CD4-positive, alpha-beta T cell (primary cell): ENCODE measurements at regions of chr4 and their contacts with region 1.

Region 1: DNA sequence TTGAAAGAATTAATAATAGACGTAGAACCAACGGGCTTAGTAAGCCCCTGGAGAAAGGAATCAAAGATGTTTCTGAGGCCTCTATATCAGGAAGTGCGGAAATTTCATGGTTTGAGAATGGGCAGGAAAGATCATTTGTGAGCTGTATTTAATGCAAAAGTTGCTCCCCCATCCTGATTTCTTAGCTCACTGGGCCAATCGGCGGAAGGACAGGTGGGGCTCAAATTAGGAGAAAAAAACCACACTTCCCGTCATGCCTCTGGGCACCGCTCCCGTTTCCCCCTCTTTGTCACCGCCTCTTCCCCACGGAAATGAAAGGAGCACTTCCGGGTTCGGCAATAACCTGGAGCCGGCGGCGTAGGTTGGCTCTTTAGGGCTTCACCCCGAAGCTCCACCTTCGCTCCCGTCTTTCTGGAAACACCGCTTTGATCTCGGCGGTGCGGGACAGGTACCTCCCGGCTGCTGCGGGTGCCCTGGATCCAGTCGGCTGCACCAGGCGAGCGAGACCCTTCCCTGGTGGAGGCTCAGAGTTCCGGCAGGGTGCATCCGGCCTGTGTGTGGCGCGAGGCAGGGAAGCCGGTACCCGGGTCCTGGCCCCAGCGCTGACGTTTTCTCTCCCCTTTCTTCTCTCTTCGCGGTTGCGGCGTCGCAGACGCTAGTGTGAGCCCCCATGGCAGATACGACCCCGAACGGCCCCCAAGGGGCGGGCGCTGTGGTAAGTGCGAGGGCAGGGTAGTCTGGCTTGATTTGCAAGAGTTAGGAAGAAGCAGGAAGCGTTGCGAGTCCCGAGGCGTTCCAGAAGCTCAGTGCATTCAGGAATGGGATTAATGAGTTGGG is at the start of gene TMEM33:
- DNase-seq: peak; percentile 59 to 92 (median 70)
- ATAC-seq: peak; percentile 85
- H3K4me3 ChIP-seq: peak within 1 kb of the TSS; percentile 85
- H3K4me3 Mint-ChIP-seq: peak within 1 kb of the TSS; percentile 94
- H3K27ac ChIP-seq: peak within 1 kb of the TSS; percentile 51 to 76
- H3K27ac Mint-ChIP-seq: peak within 1 kb of the TSS; percentile 86
- H3K4me1 ChIP-seq: peaks cover 25% of the 10 kb centered on the region
- H3K4me1 Mint-ChIP-seq: peaks cover 55% of the 10 kb centered on the region
- H3K27me3 ChIP-seq: no peaks in the 10 kb centered on the region
- H3K27me3 Mint-ChIP-seq: no peaks in the 10 kb centered on the region
- CTCF ChIP-seq: peak; percentile 16
- total RNA-seq, gene TMEM33: 18.0 to 19.7 TPM

Region 2: GRCh38 chr4:41949531-41949930 is 14.5 kb after region 1 on chr4:
- CTCF ChIA-PET with region 1: no interaction called
- POLR2A ChIA-PET with region 1: no interaction called
- intact Hi-C with region 1: no loop called
- DNase-seq: no peak
- ATAC-seq: no peak
- H3K4me3 ChIP-seq: no peak overlapping the region
- H3K4me3 Mint-ChIP-seq: no peak overlapping the region
- H3K27ac ChIP-seq: no peak overlapping the region
- H3K27ac Mint-ChIP-seq: no peak overlapping the region
- H3K4me1 ChIP-seq: no peaks in the 10 kb centered on the region
- H3K4me1 Mint-ChIP-seq: peaks cover 10% of the 10 kb centered on the region
- H3K27me3 ChIP-seq: no peaks in the 10 kb centered on the region
- H3K27me3 Mint-ChIP-seq: no peaks in the 10 kb centered on the region
- CTCF ChIP-seq: no peak

Region 3: DNA sequence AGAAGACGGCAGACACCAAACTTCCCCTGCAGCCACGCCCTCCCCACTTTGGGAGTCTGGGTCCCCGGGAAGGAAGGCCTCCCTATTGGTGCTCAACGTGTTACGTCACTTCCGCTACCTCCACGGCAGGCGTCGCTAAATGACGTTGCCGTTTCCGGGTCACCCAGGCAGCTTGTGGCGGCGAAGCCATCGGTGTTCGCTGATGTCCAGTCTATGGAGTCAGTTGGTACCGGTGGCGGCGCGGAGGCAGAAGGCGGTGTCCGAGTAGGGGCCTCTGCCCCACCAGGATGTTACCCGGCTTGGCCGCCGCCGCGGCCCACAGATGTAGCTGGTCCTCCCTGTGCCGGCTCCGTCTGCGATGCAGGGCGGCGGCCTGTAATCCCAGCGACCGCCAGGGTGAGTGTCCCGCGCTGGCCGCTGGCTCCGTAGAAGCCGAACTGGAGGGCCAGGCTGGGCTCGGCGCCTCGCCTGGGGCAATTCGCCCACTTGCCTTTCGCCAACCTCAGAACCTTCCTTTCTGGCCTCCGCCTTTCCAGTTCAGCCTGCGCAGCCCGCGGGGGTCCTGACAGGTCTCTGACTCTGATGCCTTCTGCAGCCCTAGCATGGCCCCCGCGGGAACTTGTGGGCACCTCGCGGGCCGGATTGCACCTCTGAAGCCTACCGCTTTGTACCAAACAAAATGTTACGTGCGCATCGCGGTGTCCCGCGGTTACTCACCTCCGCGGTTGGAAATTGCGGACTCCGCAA is 55.5 kb after region 1 on chr4 and contains the start of gene SLC30A9:
- CTCF ChIA-PET with region 1: no interaction called
- POLR2A ChIA-PET with region 1: interaction called, 8 read pairs
- intact Hi-C with region 1: loop called (anchors 1 to 2 kb)
- DNase-seq: peak; percentile 84 to 98 (median 88)
- ATAC-seq: peak; percentile 94
- H3K4me3 ChIP-seq: peak within 1 kb of the TSS; percentile 89
- H3K4me3 Mint-ChIP-seq: peak within 1 kb of the TSS; percentile 98
- H3K27ac ChIP-seq: peak within 1 kb of the TSS; percentile 77
- H3K27ac Mint-ChIP-seq: peak within 1 kb of the TSS; percentile 98
- H3K4me1 ChIP-seq: peaks cover 22% of the 10 kb centered on the region
- H3K4me1 Mint-ChIP-seq: peaks cover 42% of the 10 kb centered on the region
- H3K27me3 ChIP-seq: no peaks in the 10 kb centered on the region
- H3K27me3 Mint-ChIP-seq: no peaks in the 10 kb centered on the region
- CTCF ChIP-seq: peak; percentile 26
- total RNA-seq, gene SLC30A9: 18.2 to 20.4 TPM

Region 4: GRCh38 chr4:43435303-43435702 is 1500.3 kb after region 1 on chr4:
- CTCF ChIA-PET with region 1: no interaction called
- POLR2A ChIA-PET with region 1: no interaction called
- intact Hi-C with region 1: no loop called
- DNase-seq: no peak
- ATAC-seq: no peak
- H3K4me3 ChIP-seq: no peak overlapping the region
- H3K4me3 Mint-ChIP-seq: no peak overlapping the region
- H3K27ac ChIP-seq: no peak overlapping the region
- H3K27ac Mint-ChIP-seq: no peak overlapping the region
- H3K4me1 ChIP-seq: no peaks in the 10 kb centered on the region
- H3K4me1 Mint-ChIP-seq: no peaks in the 10 kb centered on the region
- H3K27me3 ChIP-seq: no peaks in the 10 kb centered on the region
- H3K27me3 Mint-ChIP-seq: no peaks in the 10 kb centered on the region
- CTCF ChIP-seq: no peak